ENCODE measurements at regions of chr14 and their contacts with region 1.

Region 1: GRCh38 chr14:76956316-76957090 is 72.0 kb downstream of the IRF2BPL start:
- DNase-seq: peak; percentile 90
- ATAC-seq: peak; percentile 62
- H3K4me3 Mint-ChIP-seq: peak overlapping the region; percentile 86
- H3K27ac Mint-ChIP-seq: peak overlapping the region; percentile 96
- H3K4me1 Mint-ChIP-seq: peaks cover 65% of the 10 kb centered on the region
- H3K27me3 Mint-ChIP-seq: no peaks in the 10 kb centered on the region

Region 2: DNA sequence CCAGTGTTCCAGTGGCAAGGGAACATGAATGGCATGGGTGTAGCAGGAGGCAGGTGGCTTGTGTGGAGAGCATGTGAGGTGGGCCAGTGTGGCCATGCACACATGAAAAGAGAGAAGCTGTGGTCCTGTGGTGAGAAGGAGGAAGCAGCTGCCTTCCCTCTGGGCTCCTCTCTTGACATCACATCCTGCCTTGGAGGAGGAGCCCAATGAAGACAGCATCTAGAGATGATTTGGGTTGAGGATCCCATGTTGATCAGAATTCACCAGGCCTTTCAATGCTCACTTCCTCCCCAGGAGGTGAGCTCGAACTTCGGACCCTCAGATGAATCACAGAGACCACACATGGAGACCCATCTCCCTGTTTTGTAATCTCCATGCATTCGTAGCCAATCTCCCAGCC is 47.7 kb before region 1 on chr14:
- POLR2A ChIA-PET with region 1: interaction called, 14 read pairs
- DNase-seq: peak; percentile 73
- ATAC-seq: peak; percentile 90
- H3K4me3 Mint-ChIP-seq: peak overlapping the region; percentile 81
- H3K27ac Mint-ChIP-seq: peak overlapping the region; percentile 99
- H3K4me1 Mint-ChIP-seq: peaks cover 54% of the 10 kb centered on the region
- H3K27me3 Mint-ChIP-seq: no peaks in the 10 kb centered on the region

Region 3: DNA sequence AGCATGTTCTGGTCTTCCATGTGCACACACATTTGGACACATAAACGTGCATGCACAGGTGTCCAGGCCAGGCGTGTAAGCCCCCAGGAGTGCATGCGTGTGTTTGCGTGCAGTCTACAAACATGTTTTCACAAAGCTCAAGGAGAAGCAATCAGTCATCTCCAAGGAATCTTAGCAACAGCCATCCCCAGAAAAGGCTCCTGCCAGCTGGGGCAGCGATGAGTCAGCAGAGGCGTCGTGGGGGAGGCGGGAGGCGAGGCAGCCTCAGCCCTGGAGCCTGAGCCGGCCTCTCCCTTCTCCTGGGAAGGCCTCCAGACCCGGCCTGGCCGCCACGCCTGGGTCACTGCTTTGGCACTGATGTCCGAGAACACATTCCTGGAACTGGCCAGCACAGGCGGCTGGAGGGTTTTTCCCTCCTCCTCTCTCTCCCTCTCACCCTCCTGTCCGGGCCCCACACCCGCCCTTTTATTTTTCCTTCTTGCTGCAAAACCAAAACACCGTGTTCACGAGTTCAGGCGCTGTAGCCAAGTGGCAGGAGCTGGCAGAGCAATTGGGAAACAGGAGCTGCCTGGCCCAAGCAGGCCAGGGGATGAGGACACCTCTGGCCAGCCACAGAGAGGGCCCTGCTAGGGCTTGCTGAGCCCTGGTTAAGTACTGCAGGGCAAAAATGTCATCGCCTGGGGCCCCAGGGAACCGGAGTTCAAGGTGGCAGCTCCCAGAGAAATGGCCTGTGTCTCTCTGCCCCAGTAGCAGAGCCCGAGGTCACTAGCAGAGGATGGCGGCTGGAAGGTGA is 37.6 kb before region 1 on chr14:
- POLR2A ChIA-PET with region 1: interaction called, 26 read pairs
- DNase-seq: no peak
- ATAC-seq: no peak
- H3K4me3 Mint-ChIP-seq: peak overlapping the region; percentile 47
- H3K27ac Mint-ChIP-seq: peak overlapping the region; percentile 58
- H3K4me1 Mint-ChIP-seq: peaks cover 49% of the 10 kb centered on the region
- H3K27me3 Mint-ChIP-seq: peaks cover 3% of the 10 kb centered on the region

Region 4: DNA sequence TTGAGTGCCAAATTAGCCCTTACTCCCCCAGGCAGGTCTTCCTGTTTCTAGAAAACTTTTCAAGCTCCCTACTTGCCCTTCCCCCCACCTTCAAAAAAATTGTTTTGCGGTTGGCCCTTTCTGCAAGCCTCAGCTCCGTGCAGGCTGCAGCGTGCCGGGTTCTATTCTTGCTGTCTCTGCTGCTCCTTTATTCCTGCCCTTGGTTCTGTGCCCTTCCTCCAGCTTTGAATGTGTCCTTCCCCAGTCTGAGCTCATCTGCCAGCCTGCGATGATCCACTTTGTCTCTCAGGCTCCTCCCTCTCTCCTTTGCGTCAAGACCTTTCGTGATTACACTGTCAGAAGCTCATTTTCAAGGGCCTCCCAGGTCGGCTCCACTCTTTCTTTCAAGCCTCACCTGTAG is 26.6 kb before region 1 on chr14:
- POLR2A ChIA-PET with region 1: interaction called, 25 read pairs
- DNase-seq: peak; percentile 67
- ATAC-seq: peak; percentile 75
- H3K4me3 Mint-ChIP-seq: peak overlapping the region; percentile 71
- H3K27ac Mint-ChIP-seq: peak overlapping the region; percentile 87
- H3K4me1 Mint-ChIP-seq: peaks cover 67% of the 10 kb centered on the region
- H3K27me3 Mint-ChIP-seq: no peaks in the 10 kb centered on the region

Region 5: GRCh38 chr14:77033622-77034521 is 77.4 kb after region 1 on chr14:
- POLR2A ChIA-PET with region 1: interaction called, 238 read pairs
- DNase-seq: peak; percentile 79
- ATAC-seq: peak; percentile 48
- H3K4me3 Mint-ChIP-seq: peak overlapping the region; percentile 93
- H3K27ac Mint-ChIP-seq: peak overlapping the region; percentile 95
- H3K4me1 Mint-ChIP-seq: peaks cover 63% of the 10 kb centered on the region
- H3K27me3 Mint-ChIP-seq: no peaks in the 10 kb centered on the region

Region 6: DNA sequence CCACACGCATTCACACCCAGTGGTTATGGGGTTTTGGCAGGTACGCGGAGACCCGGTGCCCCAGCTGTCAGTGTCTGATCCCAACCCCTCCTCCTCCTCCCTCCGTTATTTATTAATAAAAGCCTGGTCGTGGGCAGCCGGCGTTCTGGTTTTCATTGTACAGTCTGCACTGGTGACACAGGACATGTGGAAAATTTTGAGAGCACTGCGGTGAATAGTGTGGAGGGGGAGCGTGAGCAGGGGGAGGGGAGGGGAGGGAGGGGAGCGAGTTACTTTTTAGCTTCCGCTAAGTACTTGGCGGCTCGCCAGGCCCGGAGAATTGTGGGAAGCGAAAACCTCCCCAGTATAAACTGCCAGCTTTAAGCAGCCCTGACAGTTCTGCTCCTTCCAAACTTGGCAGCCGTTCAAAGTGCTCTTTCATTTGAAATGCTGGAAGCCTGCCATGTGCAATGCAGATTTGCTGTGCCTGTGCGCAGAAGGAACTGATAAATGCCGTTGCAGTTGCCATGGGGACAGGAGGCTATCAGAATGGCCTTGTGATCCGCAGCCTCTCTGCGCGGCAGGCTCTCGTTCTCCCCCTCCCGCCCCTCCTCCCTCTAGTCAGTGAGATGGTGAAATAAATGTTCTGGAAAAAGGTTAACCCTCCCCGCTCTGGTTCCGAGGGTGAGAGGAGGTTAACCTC is 83.7 kb after region 1 on chr14:
- POLR2A ChIA-PET with region 1: interaction called, 238 read pairs
- DNase-seq: peak; percentile 93
- ATAC-seq: peak; percentile 70
- H3K4me3 Mint-ChIP-seq: peak overlapping the region; percentile 87
- H3K27ac Mint-ChIP-seq: peak overlapping the region; percentile 99
- H3K4me1 Mint-ChIP-seq: peaks cover 72% of the 10 kb centered on the region
- H3K27me3 Mint-ChIP-seq: no peaks in the 10 kb centered on the region

Region 7: DNA sequence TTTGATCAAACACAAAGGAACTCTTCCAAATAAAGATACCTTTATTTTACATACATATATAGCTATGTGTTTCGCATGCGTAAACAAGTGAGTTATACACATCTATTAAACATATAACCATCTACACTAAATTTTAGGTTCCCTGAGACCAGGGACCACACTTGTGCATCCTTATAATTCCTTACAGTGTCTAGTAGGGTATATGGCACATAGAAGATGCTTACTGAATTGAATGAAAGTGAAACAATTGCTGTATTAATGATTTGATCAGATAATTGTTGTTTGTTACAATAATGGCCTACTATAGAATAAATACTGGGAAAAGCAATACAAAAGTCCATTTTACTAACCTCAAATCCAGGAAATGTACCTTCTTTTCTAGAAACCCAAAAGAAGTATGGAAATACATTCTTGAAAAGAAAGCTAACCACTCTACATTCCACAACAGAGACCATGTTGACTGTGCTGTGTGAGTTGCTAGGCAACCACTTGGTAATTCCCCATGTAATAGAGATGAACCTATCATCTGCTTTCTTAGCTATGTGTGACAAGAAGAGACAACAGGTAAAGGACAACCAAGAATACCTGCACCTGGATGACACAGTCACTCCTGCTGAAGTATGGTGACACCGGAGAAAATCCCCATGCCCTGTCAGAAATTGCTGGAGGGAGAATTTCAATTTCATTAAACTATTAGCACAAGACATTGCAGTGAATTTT is 129.7 kb after region 1 on chr14:
- POLR2A ChIA-PET with region 1: no interaction called
- DNase-seq: no peak
- ATAC-seq: peak; percentile 54
- H3K4me3 Mint-ChIP-seq: no peak overlapping the region
- H3K27ac Mint-ChIP-seq: no peak overlapping the region
- H3K4me1 Mint-ChIP-seq: peaks cover 5% of the 10 kb centered on the region
- H3K27me3 Mint-ChIP-seq: peaks cover 13% of the 10 kb centered on the region

Measured in activated naive CD8-positive, alpha-beta T cell treated with anti-CD3 and anti-CD28 coated beads, Interleukin-2, amount 10 ng/mL, durations not matched to agents 7 days and 5 days (primary cell).